Activated T-helper 1 cell treated with anti-CD3 and anti-CD28 coated beads, Interleukin-12 subunit alpha, Interleukin-12 subunit beta, Interleukin-2, Interleukin-4 antibody, amounts not matched to agents 30 ng/mL and 10 ng/mL and 1 ng/mL, durations not matched to agents 14 hours and 24 hours and 36 hours (primary cell): ENCODE measurements at regions of chr18 and their contacts with region 1.

Region 1: DNA sequence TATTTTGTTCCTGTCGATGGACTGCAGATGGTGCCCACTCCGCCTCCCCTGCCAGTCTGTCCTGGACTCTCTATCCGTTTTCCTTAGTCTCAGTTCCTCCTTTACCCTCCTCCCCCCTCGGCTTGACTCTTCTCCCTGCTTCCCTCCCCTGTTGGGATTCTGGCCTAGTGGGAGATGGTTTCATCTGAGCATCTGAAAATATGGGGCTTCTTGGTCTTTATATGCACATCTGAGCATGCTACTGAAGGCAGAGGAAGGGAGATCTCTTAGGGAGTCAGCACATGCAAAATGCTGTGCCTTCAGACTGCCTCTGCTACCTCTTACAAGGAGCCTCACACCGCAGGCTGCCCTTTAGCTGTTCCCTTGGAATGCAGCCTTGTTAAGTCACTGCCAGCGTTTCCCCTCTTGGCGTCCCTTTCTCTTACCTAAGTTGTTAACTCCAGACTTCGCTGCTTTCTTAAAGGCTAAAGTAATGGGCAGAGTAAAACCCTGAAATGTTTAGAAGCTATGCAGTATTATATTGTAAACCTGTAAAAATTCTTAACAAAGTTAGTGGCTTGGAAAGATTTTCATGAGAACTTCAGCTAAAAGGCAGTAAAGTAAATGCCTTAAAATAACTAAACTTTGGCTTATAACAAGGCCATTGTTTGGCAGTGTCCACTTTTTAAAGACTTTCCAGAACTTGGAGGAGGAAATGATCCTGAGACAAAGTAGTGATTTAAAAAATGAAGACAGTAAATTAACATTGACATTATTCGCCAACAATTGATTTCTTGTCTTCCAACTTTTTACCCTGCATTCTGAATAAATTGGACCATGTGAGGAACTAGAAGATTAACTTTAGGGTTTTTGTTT is 49.8 kb downstream of the LDLRAD4 start:
- DNase-seq: no peak
- H3K4me3 Mint-ChIP-seq: peak overlapping the region; percentile 19
- H3K27ac Mint-ChIP-seq: peak overlapping the region; percentile 74
- H3K4me1 Mint-ChIP-seq: peaks cover 62% of the 10 kb centered on the region
- H3K27me3 Mint-ChIP-seq: peaks cover 7% of the 10 kb centered on the region

Region 2: DNA sequence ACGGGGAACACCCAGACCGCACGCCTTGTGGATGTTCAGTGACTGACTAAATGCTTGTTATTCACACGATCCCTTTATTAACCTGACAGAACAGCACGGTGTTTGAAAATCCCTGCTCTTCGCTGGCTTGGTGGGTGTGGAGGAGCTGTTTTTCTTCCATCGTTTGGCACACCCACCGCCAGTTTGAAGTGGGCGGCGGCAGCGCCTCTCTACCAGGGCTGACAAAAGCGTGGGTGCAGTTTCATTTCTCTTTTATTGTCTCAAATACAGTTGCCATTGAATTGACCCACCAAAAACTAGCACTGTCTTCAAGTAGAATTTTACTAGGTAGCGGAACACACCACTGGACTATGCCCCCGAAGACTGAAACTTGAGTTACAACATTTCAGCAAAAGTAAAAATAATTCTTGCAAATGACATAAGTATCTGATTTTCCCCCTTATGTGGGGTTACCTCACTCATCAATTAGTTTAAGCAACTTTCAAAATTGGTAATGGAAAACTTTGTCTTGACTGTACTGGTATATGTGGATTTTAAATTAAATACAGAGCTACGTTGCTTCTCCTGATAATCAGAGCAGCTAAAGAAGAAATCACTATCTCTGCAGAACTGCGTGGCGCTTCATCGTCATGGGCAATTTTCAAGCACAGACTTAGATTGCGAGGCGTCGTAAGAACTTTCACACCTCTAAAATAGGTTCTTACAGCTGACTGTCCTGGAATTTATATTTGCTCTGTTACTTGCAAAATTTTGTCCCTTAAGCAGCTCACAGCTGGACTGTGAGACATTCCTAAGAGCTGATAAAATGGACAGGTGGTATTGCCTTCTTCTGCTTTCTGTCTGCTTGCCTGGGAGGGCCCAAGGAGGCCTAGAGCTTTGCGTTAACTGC is 11.0 kb after region 1 on chr18:
- intact Hi-C with region 1: loop called (anchors 1 kb)
- DNase-seq: no peak
- H3K4me3 Mint-ChIP-seq: peak overlapping the region; percentile 70
- H3K27ac Mint-ChIP-seq: peak overlapping the region; percentile 75
- H3K4me1 Mint-ChIP-seq: peaks cover 83% of the 10 kb centered on the region
- H3K27me3 Mint-ChIP-seq: no peaks in the 10 kb centered on the region

Region 3: DNA sequence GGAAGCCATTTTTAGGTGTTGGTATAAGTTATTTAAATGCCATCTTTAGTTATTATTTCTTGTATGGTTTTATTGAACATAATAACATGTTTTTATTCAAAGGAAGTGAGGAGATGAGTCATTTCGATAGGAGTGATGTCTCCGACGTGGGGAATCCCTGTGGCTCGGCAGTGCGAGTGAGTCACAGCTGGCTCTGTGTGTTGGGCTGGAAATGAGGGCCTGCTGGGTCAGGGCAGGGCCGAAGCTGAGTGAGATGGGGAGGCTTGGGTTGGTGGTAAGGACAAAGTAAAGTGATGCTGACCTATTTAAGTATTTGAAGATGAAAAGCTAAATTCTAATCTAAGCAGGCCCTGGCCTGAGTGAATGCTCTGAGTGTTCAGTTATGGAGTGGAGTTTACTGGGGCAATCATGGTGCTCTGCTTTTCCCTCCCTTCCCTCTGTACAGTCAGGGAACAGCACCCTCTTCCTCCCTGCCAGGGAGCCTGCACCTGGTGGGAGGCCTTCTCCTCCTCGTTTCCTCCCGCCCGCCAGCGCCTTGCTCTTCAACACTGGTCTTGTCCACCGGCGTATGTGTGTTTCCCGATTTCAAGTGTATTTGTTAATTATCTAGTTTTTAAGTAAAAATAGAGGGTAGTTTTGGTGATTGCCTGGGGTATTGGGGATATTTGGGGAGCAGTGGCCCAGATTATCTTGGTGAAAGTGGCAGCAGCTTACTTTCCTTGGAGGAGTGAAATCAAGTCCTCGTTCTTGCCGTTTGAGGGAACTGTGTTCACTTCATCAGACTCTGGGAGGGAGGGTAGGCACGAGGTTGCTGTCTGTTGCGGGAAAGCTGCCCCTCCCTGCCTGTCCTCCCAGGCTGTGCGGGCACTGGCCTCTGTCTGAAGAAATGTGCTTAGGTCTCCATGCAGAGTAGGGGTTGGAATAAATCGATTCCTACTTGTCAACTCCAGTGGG is 107.2 kb after region 1 on chr18:
- intact Hi-C with region 1: loop called (anchors 1 kb)
- DNase-seq: peak; percentile 80
- H3K4me3 Mint-ChIP-seq: peak overlapping the region; percentile 74
- H3K27ac Mint-ChIP-seq: peak overlapping the region; percentile 95
- H3K4me1 Mint-ChIP-seq: peaks cover 78% of the 10 kb centered on the region
- H3K27me3 Mint-ChIP-seq: peaks cover 4% of the 10 kb centered on the region

Region 4: GRCh38 chr18:13455960-13456471 is 187.6 kb after region 1 on chr18:
- intact Hi-C with region 1: loop called (anchors 5 kb)
- DNase-seq: peak; percentile 35
- H3K4me3 Mint-ChIP-seq: peak overlapping the region; percentile 60
- H3K27ac Mint-ChIP-seq: peak overlapping the region; percentile 66
- H3K4me1 Mint-ChIP-seq: peaks cover 40% of the 10 kb centered on the region
- H3K27me3 Mint-ChIP-seq: peaks cover 4% of the 10 kb centered on the region

Region 5: GRCh38 chr18:13611601-13612195 is 343.3 kb after region 1 on chr18:
- intact Hi-C with region 1: loop called (anchors 1 kb)
- DNase-seq: no peak
- H3K4me3 Mint-ChIP-seq: peak overlapping the region; percentile 80
- H3K27ac Mint-ChIP-seq: peak overlapping the region; percentile 83
- H3K4me1 Mint-ChIP-seq: peaks cover 73% of the 10 kb centered on the region
- H3K27me3 Mint-ChIP-seq: peaks cover 1% of the 10 kb centered on the region

Region 6: GRCh38 chr18:14043903-14044302 is 775.5 kb after region 1 on chr18:
- intact Hi-C with region 1: no loop called
- DNase-seq: no peak
- H3K4me3 Mint-ChIP-seq: no peak overlapping the region
- H3K27ac Mint-ChIP-seq: no peak overlapping the region
- H3K4me1 Mint-ChIP-seq: no peaks in the 10 kb centered on the region
- H3K27me3 Mint-ChIP-seq: no peaks in the 10 kb centered on the region